GM10248 (cell line): ENCODE measurements at regions of chr11 and their contacts with region 1.

Region 1: DNA sequence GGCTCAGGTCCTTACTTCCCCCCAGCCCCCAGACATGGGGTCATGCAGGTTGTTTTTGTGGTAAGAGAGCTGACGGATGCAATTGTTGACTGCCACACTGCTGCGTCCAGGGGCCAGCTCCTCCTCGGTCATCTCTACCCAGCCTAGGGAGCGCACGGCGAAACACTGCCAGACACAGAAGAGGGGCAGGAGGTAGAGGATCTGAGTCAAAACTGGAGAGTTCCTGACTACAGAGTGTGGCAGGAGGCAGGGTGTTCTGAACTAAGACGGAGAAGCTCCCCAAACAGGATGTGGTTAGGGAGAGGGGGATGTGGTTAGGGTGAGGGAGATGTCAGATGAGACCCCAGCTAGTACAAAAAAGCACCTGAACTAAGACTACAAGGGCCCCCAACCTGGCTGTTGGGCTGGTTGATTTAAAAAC is 12.3 kb downstream of the SMPD1 start:
- DNase-seq: peak; percentile 77
- CTCF ChIP-seq: no peak

Region 2: GRCh38 chr11:6389921-6390724 is 12.4 kb before region 1 on chr11 and contains the start of gene SMPD1:
- CTCF ChIA-PET with region 1: interaction called, 10 read pairs
- POLR2A ChIA-PET with region 1: no interaction called
- DNase-seq: peak; percentile 97
- CTCF ChIP-seq: no peak

Region 3: DNA sequence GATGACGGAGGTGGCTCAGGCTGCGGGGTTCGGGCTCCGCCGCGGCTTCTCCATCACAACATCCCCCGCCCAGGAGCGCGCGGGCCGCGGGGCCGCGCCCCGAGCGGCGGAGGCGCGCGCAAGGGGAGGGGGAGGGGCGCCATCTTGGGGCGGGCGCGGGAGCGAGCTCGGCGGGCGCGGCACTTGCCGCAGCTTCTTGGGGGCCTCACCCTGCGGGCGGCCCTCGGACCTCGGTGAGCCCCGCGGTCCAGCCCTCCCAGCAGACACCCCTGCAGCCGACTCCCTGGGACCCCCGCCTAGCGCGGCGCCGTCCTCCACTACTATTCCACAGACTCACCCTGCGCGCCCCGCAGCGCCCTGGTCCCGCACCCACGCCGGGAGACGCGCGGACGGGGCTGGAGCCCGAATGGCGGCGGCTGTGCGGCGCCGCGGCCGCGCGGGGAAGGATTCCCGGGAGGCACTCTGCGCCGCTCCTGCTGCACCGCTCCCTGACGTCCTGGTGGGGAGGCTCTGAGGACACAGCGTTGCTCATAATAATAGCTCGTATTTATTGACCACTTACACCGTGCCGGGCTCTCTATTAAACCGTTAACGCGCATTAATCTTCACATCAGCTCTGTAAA is 16.5 kb after region 1 on chr11 and contains the start of gene APBB1:
- CTCF ChIA-PET with region 1: interaction called, 6 read pairs
- POLR2A ChIA-PET with region 1: interaction called, 12 read pairs
- DNase-seq: peak; percentile 76
- CTCF ChIP-seq: no peak

Region 4: DNA sequence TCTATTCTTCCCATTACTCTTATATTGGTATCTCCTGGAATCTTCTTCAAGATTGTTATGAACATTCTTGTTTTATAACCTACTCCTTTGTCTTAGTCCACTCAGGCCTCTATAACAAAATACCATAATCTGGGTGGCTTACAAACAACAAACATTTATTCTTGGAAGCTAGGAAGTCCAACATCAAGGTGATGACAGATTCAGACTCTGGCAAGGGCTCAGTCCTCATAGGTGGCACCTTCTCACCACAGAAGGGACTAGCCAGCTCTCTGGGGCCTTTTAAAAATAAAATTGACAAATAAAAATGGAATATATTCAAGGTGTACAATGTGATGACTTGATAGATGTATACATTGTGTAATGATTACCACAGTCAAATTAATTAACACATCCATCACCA is 114.3 kb after region 1 on chr11:
- CTCF ChIA-PET with region 1: no interaction called
- POLR2A ChIA-PET with region 1: no interaction called
- DNase-seq: no peak
- CTCF ChIP-seq: no peak

Region 5: GRCh38 chr11:6544921-6545850 is 142.6 kb after region 1 on chr11:
- CTCF ChIA-PET with region 1: no interaction called
- POLR2A ChIA-PET with region 1: no interaction called
- DNase-seq: no peak
- CTCF ChIP-seq: no peak